MCF 10A (cell line): ENCODE measurements at regions of chr13 and their contacts with region 1.

Region 1: DNA sequence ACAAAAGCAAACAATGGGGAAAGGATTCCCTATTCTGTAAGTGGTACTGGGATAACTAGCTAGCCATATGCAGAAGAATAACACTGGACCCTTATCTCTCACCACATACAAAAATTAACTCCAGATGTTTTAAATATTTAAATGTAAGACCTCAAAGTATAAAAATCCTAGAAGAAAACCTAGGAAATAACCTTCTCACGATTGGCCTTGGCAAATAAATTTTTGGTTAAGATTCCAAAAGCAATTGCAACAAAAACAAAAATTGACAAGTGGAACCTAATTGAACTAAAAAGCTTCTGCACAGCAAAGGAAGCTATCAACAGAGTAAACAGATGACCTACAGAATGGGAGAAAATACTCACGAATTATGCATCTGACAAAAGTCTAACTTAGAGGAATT is 10.8 kb upstream of the TDRD3 start:
- DNase-seq: no peak
- H3K4me3 Mint-ChIP-seq: no peak overlapping the region
- H3K27ac Mint-ChIP-seq: no peak overlapping the region
- H3K4me1 Mint-ChIP-seq: no peaks in the 10 kb centered on the region
- H3K27me3 Mint-ChIP-seq: peaks cover 8% of the 10 kb centered on the region
- CTCF ChIP-seq: no peak

Region 2: GRCh38 chr13:60417734-60418133 is 31.5 kb after region 1 on chr13:
- CTCF ChIA-PET with region 1: no interaction called
- POLR2A ChIA-PET with region 1: no interaction called
- intact Hi-C with region 1: loop called (anchors 1 kb)
- DNase-seq: no peak
- H3K4me3 Mint-ChIP-seq: no peak overlapping the region
- H3K27ac Mint-ChIP-seq: no peak overlapping the region
- H3K4me1 Mint-ChIP-seq: peaks cover 6% of the 10 kb centered on the region
- H3K27me3 Mint-ChIP-seq: no peaks in the 10 kb centered on the region
- CTCF ChIP-seq: no peak